MCF 10A (cell line): ENCODE measurements at regions of chr2 and their contacts with region 1.

Region 1: DNA sequence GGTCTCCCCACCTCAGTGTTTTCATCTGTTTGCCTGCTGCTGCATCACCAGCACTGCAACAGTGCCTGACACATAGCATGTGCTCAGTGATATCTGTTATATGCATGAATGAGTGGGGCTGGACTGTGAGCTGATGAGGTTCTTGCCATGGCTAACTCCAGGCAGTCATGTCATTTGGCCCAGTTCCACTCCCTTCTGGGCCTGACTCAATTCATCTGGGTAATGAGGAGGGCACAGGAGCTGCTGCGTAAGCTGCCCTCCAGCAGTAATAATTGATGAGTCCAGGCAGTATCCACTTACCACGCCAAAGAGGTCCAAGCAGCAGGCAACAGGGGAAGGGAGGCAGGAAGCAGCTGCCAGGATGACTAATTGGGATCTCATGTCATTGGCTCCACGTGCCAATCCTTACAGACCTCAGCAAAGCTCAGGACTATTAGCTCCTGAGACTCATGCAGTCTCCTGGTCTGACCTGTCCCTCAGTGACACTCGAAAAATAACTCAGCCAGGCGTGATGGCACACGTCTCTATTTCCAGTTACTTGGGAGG is 34.1 kb upstream of the MAT2A start:
- DNase-seq: peak; percentile 98
- H3K4me3 Mint-ChIP-seq: peak overlapping the region; percentile 21
- H3K27ac Mint-ChIP-seq: peak overlapping the region; percentile 55
- H3K4me1 Mint-ChIP-seq: peaks cover 30% of the 10 kb centered on the region
- H3K27me3 Mint-ChIP-seq: no peaks in the 10 kb centered on the region
- CTCF ChIP-seq: no peak

Region 2: GRCh38 chr2:85457877-85458316 is 47.0 kb before region 1 on chr2:
- CTCF ChIA-PET with region 1: interaction called, 4 read pairs
- POLR2A ChIA-PET with region 1: interaction called, 21 read pairs
- intact Hi-C with region 1: no loop called
- DNase-seq: peak; percentile 96
- H3K4me3 Mint-ChIP-seq: no peak overlapping the region
- H3K27ac Mint-ChIP-seq: peak overlapping the region; percentile 40
- H3K4me1 Mint-ChIP-seq: peaks cover 17% of the 10 kb centered on the region
- H3K27me3 Mint-ChIP-seq: no peaks in the 10 kb centered on the region
- CTCF ChIP-seq: no peak

Region 3: DNA sequence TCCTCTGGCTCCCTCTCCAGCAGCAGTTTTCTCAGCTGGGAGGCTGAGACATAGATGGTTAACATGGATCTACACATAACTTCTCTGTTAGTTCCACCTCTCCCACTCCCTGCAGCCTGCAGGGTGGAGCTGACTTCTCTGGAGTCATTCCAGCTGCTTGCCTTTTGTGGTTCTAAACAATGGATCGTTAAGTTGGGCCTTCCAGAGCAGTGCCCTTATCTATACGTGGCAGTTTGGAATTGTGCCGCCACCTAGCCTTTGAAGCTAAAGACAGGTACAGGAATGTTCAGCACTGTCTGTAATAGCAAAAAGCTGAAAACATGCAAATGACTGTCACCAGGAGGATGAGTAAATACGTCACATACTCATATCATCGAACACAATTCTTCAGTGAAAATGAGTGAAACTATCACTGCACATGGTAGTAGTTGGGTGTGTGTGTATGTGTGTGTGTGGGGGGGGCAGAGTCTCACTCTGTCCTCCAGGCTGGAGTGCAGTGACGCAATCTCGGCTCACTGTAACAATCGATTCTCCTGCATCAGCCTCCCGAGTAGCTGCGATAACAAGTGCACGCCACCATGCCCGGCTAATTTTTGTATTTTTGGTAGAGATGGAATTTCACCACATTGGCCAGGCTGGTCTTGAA is 36.0 kb before region 1 on chr2:
- CTCF ChIA-PET with region 1: interaction called, 4 read pairs
- POLR2A ChIA-PET with region 1: interaction called, 48 read pairs
- intact Hi-C with region 1: no loop called
- DNase-seq: peak; percentile 87
- H3K4me3 Mint-ChIP-seq: no peak overlapping the region
- H3K27ac Mint-ChIP-seq: no peak overlapping the region
- H3K4me1 Mint-ChIP-seq: peaks cover 29% of the 10 kb centered on the region
- H3K27me3 Mint-ChIP-seq: no peaks in the 10 kb centered on the region
- CTCF ChIP-seq: no peak

Region 4: GRCh38 chr2:85475799-85476490 is 28.9 kb before region 1 on chr2:
- CTCF ChIA-PET with region 1: interaction called, 4 read pairs
- POLR2A ChIA-PET with region 1: interaction called, 48 read pairs
- intact Hi-C with region 1: no loop called
- DNase-seq: no peak
- H3K4me3 Mint-ChIP-seq: no peak overlapping the region
- H3K27ac Mint-ChIP-seq: no peak overlapping the region
- H3K4me1 Mint-ChIP-seq: no peaks in the 10 kb centered on the region
- H3K27me3 Mint-ChIP-seq: no peaks in the 10 kb centered on the region
- CTCF ChIP-seq: no peak

Region 5: DNA sequence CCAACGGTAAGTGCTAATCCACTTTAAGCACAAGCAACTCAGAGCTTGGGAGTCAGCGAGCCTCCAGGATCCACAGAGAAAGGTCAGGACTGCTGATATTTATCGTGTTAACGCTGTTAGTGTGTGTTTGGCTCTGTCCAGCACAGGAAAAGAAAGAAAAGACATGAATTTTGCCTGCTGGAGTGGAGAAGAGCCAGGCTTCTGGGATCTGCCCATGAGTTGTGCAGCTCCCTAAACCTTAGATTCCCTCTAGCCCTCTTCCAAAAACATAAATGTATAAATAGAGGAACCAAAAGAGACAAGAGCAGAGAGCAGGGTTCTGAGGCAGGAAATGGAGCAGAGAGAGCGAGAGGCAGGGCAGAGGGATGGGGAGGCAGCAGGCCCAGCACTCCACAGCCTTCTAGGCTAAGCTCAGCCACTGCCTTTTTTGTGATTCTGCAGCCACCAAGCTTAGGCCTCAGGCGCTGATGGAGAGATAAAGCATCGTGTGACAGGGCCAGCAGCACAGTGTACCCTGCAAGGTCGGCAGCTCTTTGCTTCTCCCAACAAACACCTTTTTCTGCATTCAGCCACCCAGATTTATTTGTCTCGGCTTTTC is 19.6 kb after region 1 on chr2:
- CTCF ChIA-PET with region 1: interaction called, 4 read pairs
- POLR2A ChIA-PET with region 1: interaction called, 376 read pairs
- intact Hi-C with region 1: no loop called
- DNase-seq: no peak
- H3K4me3 Mint-ChIP-seq: no peak overlapping the region
- H3K27ac Mint-ChIP-seq: no peak overlapping the region
- H3K4me1 Mint-ChIP-seq: no peaks in the 10 kb centered on the region
- H3K27me3 Mint-ChIP-seq: no peaks in the 10 kb centered on the region
- CTCF ChIP-seq: no peak

Region 6: DNA sequence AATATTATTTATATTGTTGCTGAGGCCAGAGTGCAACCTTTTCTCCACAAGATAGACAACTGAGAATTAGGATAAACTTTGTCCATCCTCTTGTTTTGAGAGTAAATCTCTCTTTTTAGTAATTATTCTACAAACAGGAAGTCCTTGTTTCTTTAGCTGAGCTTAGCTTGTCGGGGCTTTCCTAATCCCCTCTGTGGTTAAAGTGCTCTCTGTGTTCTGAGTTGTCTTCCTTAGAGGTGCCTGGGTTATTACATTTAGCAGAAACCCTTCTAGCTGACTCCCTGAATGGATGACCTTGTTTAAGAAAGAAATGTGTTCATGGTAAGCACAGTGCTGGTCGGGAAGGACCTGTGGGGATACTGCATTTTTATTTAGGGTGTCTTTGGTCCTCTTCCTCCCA is 123.8 kb after region 1 on chr2:
- CTCF ChIA-PET with region 1: no interaction called
- POLR2A ChIA-PET with region 1: no interaction called
- intact Hi-C with region 1: no loop called
- DNase-seq: no peak
- H3K4me3 Mint-ChIP-seq: no peak overlapping the region
- H3K27ac Mint-ChIP-seq: no peak overlapping the region
- H3K4me1 Mint-ChIP-seq: no peaks in the 10 kb centered on the region
- H3K27me3 Mint-ChIP-seq: no peaks in the 10 kb centered on the region
- CTCF ChIP-seq: no peak